ENCODE measurements at regions of chr11 and their contacts with region 1.

Region 1: DNA sequence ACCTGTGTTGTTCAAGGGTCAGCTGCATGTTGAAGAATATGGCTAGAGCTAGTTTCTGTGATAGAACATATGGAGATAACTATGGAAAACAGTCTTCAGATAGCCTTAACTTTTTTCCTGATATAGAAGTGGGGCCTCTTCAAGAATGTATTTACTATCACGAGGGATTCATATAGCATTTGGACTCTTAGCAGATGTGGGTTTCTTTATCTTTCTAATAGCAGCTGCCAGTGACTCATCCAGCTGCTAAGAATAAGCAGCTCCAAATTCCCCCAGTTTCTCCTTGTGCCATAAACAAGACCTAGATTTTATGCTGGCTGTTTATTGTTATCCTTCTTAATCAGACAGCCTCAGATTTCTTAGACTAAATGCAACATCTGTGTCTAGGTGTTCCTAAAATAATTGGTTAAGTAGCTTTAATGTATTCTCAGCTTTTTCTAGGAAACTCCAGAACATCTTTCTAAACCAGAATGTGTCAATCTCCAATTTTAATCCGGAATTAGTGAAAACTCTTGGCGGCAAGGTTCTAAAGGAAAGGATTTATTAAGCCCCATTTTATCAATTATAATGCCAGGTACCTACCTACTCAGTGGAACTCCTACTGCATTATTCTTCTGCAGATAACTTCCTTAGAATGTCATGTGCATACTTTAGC is 119.8 kb downstream of the CSTPP1 start:
- DNase-seq: no peak
- ATAC-seq: no peak
- H3K4me3 ChIP-seq: no peak overlapping the region
- H3K27ac ChIP-seq: no peak overlapping the region
- H3K4me1 ChIP-seq: no peaks in the 10 kb centered on the region
- H3K27me3 ChIP-seq: no peaks in the 10 kb centered on the region
- CTCF ChIP-seq: no peak

Region 2: GRCh38 chr11:47035108-47035507 is 21.3 kb before region 1 on chr11:
- CTCF ChIA-PET with region 1: no interaction called
- POLR2A ChIA-PET with region 1: interaction called, 18 read pairs
- in situ Hi-C with region 1: no loop called
- intact Hi-C with region 1: no loop called
- DNase-seq: no peak
- ATAC-seq: no peak
- H3K4me3 ChIP-seq: no peak overlapping the region
- H3K27ac ChIP-seq: no peak overlapping the region
- H3K4me1 ChIP-seq: no peaks in the 10 kb centered on the region
- H3K27me3 ChIP-seq: no peaks in the 10 kb centered on the region
- CTCF ChIP-seq: no peak

Region 3: DNA sequence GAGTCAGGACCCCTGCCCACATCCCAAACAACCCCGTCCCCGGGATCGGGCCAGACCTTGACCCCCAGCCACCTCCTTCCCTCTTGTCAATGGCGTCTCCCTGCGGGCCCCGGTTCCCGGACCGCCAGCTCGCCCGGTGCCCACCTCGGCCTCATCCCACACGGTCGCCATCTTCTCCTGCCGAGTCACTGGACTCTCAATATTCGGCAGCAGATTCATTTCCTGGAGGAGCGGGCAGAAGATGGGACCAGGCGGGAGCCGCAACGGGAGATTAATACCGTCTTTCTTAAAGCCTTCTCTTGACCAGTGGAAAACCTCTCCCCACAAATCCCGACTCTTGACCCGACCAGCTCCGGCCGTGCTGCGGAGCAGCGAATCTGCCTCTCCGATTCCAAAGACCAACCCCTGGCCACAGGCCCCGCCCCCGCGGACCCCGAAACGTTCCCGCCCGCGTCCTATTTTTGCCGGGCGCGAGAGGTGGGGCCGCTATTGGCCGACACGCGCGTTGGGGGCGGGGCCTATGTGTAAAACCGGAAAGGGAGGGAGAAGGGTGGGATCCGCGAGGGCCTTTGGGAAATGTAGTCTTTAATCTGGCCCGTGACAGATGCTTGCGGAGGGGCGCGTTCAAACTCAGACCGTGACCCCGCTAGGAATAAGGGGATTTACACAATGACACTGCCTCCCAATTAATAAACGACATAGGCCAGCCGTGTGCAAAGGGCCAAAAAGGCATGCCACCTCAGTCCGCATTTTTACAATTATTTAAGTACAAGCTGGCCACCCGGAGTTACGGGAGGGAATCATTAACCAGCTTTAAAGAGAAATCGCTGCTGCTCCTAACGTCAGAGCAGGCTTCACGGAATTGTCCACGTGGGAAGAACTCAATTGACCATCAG is 369.9 kb after region 1 on chr11 and contains the start of gene PSMC3:
- CTCF ChIA-PET with region 1: no interaction called
- POLR2A ChIA-PET with region 1: no interaction called
- in situ Hi-C with region 1: no loop called
- intact Hi-C with region 1: no loop called
- DNase-seq: peak; percentile 83
- ATAC-seq: peak; percentile 95
- H3K4me3 ChIP-seq: peak within 1 kb of the TSS; percentile 79 to 93
- H3K27ac ChIP-seq: peak within 1 kb of the TSS; percentile 92
- H3K4me1 ChIP-seq: peaks cover 8% of the 10 kb centered on the region
- H3K27me3 ChIP-seq: no peaks in the 10 kb centered on the region
- CTCF ChIP-seq: no peak
- total RNA-seq, gene PSMC3: 181 TPM

Measured in Panc1 (cell line).